Aorta (tissue), 5 donors: ENCODE measurements at regions of chr1 and their contacts with region 1.

Region 1: DNA sequence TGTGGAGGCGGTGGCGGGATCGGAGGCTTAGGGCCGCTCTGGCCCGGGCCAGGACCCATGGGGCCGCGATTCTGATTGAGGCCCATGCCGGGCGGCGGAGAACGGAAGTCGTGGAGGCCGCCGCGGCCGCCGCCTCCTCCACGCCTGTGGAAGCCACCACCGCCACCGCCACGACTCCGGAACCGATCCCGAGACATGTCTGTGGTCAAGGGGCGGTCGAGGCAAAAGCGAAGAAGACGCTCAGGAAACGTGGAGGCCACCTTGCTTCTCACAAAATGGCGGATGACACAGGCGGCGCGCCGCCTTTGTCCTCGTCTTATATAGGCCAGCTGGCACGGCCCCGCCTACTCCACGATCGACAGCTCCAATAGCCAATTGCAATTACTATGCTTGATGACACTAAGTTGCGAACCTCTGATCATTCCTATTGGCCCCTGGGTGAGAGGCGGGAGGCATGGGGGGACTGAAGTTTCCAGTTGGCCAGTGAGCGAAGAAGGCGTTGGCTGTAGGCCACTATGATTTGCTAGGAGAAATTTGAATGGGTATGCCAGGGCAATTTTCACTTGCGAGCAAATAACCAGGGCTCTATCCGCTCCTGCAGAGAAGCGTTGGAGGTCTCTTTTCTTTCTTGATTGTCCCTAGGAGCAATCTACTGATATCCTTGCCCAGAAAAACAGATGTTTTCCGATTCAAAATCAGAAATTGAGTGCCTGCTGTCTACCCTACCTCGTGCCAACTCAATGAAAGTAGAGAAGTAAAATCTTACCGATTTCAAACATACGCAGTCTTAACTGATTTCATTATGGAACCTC is at the start of gene SFPQ:
- DNase-seq: peak; percentile 97
- ATAC-seq: peak; percentile 98
- H3K4me3 ChIP-seq: peak within 1 kb of the TSS; percentile 87 to 93
- H3K27ac ChIP-seq: peak within 1 kb of the TSS; percentile 95 to 98
- H3K4me1 ChIP-seq: peaks cover 0 to 3% of the 10 kb centered on the region in 2 donors
- H3K27me3 ChIP-seq: no peaks in the 10 kb centered on the region
- total RNA-seq, gene SFPQ: 206 to 231 TPM

Region 2: DNA sequence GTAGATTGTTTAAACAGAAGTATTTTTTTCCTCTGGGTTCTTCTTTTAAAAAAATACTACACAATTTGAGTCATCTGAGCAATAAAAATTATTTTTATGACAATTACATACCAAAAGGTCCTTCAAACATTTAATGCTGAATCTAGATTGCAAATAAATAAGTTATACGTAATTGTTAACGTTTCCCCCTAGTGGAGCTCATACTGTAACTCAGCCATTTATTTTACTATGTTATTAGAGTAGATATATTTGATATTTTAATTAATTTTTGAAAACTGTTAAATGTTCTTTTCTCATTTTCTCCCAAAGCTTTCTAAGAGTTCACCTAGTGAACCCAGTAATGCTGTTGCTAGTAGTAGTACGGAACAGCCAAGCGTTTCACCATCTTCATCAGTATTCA is 80.4 kb before region 1 on chr1:
- intact Hi-C with region 1: no loop called
- DNase-seq: no peak
- ATAC-seq: no peak
- H3K4me3 ChIP-seq: no peak overlapping the region
- H3K27ac ChIP-seq: no peak overlapping the region
- H3K4me1 ChIP-seq: no peaks in the 10 kb centered on the region
- H3K27me3 ChIP-seq: no peaks in the 10 kb centered on the region

Region 3: GRCh38 chr1:35243691-35244090 is 50.6 kb after region 1 on chr1:
- intact Hi-C with region 1: no loop called
- DNase-seq: peak in 1 of 2 donors; percentile 54
- ATAC-seq: no peak
- H3K4me3 ChIP-seq: no peak overlapping the region
- H3K27ac ChIP-seq: no peak overlapping the region
- H3K4me1 ChIP-seq: no peaks in the 10 kb centered on the region
- H3K27me3 ChIP-seq: no peaks in the 10 kb centered on the region

Region 4: GRCh38 chr1:35319988-35320713 is 127.1 kb after region 1 on chr1:
- intact Hi-C with region 1: no loop called
- DNase-seq: peak in 1 of 2 donors; percentile 48
- ATAC-seq: no peak
- H3K4me3 ChIP-seq: no peak overlapping the region
- H3K27ac ChIP-seq: peak overlapping the region in 1 of 2 donors; percentile 29
- H3K4me1 ChIP-seq: peaks cover 0 to 4% of the 10 kb centered on the region in 2 donors
- H3K27me3 ChIP-seq: no peaks in the 10 kb centered on the region

Region 5: DNA sequence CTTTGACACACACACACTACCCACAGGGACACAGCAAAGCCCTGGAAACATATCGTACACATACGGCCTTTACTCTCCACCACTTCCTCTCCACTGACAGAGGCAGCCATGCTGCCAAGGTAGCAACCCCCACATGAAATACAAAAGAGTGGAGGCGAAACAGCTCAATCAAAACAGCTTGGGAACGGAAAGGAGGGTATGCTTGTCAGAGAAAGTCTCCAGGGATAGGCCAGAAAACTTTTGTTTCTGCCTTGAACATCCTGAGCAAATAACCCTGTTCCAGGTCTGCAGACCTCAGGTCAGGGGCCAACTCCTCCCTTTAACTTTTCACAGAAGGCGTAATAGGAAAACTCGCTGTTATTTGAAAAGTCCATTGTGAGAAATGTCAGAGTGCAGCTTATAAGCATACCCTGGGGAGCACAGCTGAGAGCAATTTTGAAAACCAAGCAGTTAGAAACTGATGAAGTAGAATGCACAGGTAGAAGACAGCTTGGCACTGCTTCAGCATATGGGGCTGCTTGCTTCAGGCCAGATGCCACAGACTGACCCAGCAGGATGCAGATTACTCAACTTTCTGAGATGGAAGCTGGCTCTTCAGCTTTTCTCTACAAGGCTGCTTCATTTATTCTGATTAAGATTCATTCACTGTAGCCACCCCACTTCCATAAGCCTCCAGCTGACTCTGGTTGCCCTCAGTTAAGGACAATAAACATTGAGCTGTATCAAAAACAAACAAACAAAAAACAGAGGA is 346.2 kb after region 1 on chr1:
- intact Hi-C with region 1: loop called in 1 of 2 experiments (anchors 10 kb)
- DNase-seq: no peak
- ATAC-seq: peak; percentile 37
- H3K4me3 ChIP-seq: no peak overlapping the region
- H3K27ac ChIP-seq: peak overlapping the region; percentile 84 to 97
- H3K4me1 ChIP-seq: peaks cover 4 to 19% of the 10 kb centered on the region in 2 donors
- H3K27me3 ChIP-seq: no peaks in the 10 kb centered on the region

Region 6: GRCh38 chr1:35557292-35558063 is 364.4 kb after region 1 on chr1 and contains the starts of genes KIAA0319L and NCDN:
- intact Hi-C with region 1: loop called (anchors 10 kb)
- DNase-seq: peak; percentile 98
- ATAC-seq: peak; percentile 98
- H3K4me3 ChIP-seq: peak within 1 kb of the TSS; percentile 75 to 85
- H3K27ac ChIP-seq: peak within 1 kb of the TSS; percentile 32 to 72
- H3K4me1 ChIP-seq: no peaks in the 10 kb centered on the region
- H3K27me3 ChIP-seq: no peaks in the 10 kb centered on the region
- total RNA-seq, gene KIAA0319L: 46.0 to 58.6 TPM
- total RNA-seq, gene NCDN: 20.4 to 21.7 TPM

Region 7: GRCh38 chr1:35564037-35564883 is 371.2 kb after region 1 on chr1:
- intact Hi-C with region 1: loop called (anchors 10 kb)
- DNase-seq: peak; percentile 85 to 90
- ATAC-seq: peak; percentile 59
- H3K4me3 ChIP-seq: no peak overlapping the region
- H3K27ac ChIP-seq: no peak overlapping the region
- H3K4me1 ChIP-seq: no peaks in the 10 kb centered on the region
- H3K27me3 ChIP-seq: no peaks in the 10 kb centered on the region